Stomach (tissue), 19 donors: ENCODE measurements at regions of chr11 and their contacts with region 1.

Region 1: DNA sequence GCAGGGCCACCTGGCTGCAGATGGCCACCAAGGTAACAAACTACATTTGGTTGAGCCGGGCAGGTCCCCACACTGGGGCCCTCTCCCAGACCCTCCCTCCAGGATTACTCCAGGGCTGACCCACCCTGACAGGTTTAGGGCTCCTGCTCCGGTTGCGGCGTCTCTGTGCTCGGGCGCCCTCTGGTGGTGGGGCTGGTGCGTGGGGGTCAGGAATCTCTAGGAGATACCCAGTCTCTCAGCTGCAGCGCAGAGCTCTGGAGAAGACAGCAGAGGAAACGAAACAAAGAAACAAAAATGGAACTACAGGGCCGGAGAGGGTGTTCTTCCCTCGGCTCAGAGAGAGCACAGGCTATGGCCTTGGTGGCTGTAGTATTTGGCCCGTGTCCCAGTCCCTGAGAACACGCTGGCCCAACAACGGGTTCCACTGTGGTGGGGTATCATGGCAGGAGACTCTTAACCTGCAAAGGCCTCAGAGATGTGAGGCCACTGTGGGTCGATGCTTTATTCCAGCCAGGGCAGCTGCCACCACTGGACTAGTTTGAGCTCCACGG is 2.4 kb downstream of the C11orf96 start:
- DNase-seq: peak; percentile 77 to 78
- H3K4me3 ChIP-seq: peak overlapping the region; percentile 73 to 79 (median 76)
- H3K27ac ChIP-seq: peak overlapping the region; percentile 57 to 97 (median 87)
- H3K4me1 ChIP-seq: peaks cover 22 to 40% (median 37%) of the 10 kb centered on the region in 4 donors
- H3K27me3 ChIP-seq: peaks cover 0 to 54% (median 39%) of the 10 kb centered on the region in 3 donors
- CTCF ChIP-seq: peak in 5 of 7 experiments; percentile 54 to 84 (median 79)
- EP300 ChIP-seq: no peak
- POLR2A ChIP-seq: no peak

Region 2: GRCh38 chr11:43880640-43881159 is 64.1 kb before region 1 on chr11 and contains the start of gene ALKBH3:
- intact Hi-C with region 1: loop called (anchors 5 kb)
- DNase-seq: peak; percentile 95 to 97
- H3K4me3 ChIP-seq: peak within 1 kb of the TSS; percentile 60 to 97 (median 81)
- H3K27ac ChIP-seq: peak within 1 kb of the TSS; percentile 23 to 80 (median 74)
- H3K4me1 ChIP-seq: peaks cover 14 to 26% (median 24%) of the 10 kb centered on the region in 4 donors
- H3K27me3 ChIP-seq: peaks cover 0 to 30% (median 12%) of the 10 kb centered on the region in 3 donors
- CTCF ChIP-seq: peak in 1 of 7 experiments; percentile 41
- EP300 ChIP-seq: no peak
- POLR2A ChIP-seq: no peak
- total RNA-seq, gene ALKBH3: 25.7 to 113 (median 37.4) TPM

Region 3: DNA sequence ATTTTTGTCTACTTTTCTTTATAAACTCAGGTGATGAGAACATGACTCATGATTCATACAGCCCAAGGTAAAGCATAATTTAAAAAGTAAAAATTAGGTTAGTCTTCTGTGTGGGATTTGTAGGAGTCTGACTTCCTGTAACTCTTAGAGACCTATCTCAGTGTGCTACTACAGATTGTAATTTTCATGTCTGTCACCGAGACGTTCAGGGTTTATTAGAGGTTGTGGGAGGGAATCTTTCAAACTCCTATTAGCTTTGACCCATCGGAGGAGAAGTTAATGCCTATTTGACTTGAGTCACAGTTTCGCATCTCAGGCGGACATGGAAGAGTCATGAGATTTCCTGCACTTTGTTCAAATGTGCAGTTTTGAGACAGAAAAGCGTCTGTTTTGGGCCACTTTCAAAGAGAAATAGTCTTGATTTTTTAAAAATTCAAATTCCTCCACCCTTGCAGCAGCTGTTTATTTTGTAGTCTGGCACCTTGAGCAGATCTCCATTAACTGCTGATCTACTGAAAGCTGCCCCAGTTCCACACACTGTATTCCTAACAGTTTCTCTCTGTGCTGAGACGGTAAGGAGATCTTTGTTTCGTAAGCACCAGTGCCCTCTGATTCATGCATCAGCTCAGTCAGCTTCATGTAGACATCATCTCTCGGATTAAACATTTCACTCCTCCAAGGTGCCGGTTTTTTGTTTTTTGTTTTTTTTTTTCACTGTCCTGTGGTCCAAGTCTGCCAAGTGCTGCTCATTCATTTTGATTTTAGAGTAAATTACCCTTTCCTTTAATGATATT is 39.9 kb before region 1 on chr11:
- intact Hi-C with region 1: loop called (anchors 5 kb)
- DNase-seq: peak in 1 of 2 donors; percentile 41
- H3K4me3 ChIP-seq: no peak overlapping the region
- H3K27ac ChIP-seq: peak overlapping the region in 4 of 5 donors; percentile 28 to 64 (median 49)
- H3K4me1 ChIP-seq: peaks cover 0 to 35% (median 29%) of the 10 kb centered on the region in 4 donors
- H3K27me3 ChIP-seq: no peaks in the 10 kb centered on the region
- CTCF ChIP-seq: no peak
- EP300 ChIP-seq: no peak
- POLR2A ChIP-seq: no peak

Region 4: GRCh38 chr11:44095506-44096394 is 150.9 kb after region 1 on chr11 and contains the start of gene EXT2:
- intact Hi-C with region 1: no loop called
- DNase-seq: peak; percentile 93 to 96
- H3K4me3 ChIP-seq: peak within 1 kb of the TSS; percentile 72 to 86 (median 78)
- H3K27ac ChIP-seq: peak within 1 kb of the TSS; percentile 80 to 94 (median 86)
- H3K4me1 ChIP-seq: peaks cover 10 to 31% (median 20%) of the 10 kb centered on the region in 4 donors
- H3K27me3 ChIP-seq: no peaks in the 10 kb centered on the region
- CTCF ChIP-seq: peak in 5 of 7 experiments; percentile 67 to 89 (median 86)
- EP300 ChIP-seq: no peak
- POLR2A ChIP-seq: no peak
- total RNA-seq, gene EXT2: 10.5 to 93.8 (median 49.1) TPM